ENCODE measurements at regions of chr15 and their contacts with region 1.

Region 1: GRCh38 chr15:90320061-90320884 is 31.8 kb upstream of the ZNF774 start:
- DNase-seq: peak; percentile 93
- H3K4me3 ChIP-seq: peak overlapping the region in 1 of 4 donors; percentile 11
- H3K27ac ChIP-seq: peak overlapping the region; percentile 28 to 50 (median 36)
- H3K4me1 ChIP-seq: peaks cover 0 to 42% (median 32%) of the 10 kb centered on the region in 4 donors
- H3K27me3 ChIP-seq: no peaks in the 10 kb centered on the region
- CTCF ChIP-seq: peak; percentile 95 to 100 (median 99)
- EP300 ChIP-seq: no peak
- POLR2A ChIP-seq: no peak

Region 2: DNA sequence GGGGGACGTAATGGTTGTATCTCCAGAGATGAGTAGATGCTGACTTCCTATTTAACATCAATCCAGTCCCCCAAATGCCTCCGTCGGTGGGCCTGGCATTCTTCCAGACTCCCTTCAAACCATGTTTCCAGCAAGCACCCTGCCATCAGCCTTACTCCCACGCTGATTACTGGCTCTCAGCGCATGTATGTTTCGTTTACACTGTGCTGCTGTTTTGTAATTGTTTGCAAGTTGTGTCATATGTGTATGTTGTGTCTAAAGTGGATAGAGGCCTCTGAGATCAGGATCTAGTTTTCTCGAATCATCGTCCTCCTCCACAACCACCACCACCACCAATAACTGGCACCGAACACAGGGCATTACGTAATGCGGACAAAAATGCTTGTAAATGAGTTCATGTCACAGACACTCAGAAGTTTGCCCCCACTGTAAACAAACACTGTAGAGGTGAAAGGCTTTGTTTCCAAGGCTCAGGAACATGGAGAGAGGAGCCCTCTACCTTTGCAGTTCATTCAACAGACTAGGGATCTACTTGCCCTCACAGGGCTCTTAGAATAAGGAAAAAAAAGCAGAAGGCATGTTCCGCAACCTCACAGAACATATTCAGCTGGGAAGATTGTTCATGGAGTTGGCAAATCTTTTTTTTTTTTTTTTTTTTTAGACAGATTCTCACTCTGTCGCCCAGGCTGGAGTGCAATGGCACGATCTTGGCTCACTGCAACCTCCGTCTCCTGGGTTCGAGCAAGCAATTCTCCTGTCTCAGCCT is 165.2 kb before region 1 on chr15:
- intact Hi-C with region 1: no loop called
- DNase-seq: peak; percentile 78
- H3K4me3 ChIP-seq: no peak overlapping the region
- H3K27ac ChIP-seq: peak overlapping the region; percentile 17 to 72 (median 64)
- H3K4me1 ChIP-seq: peaks cover 0 to 51% (median 36%) of the 10 kb centered on the region in 4 donors
- H3K27me3 ChIP-seq: no peaks in the 10 kb centered on the region
- CTCF ChIP-seq: no peak
- EP300 ChIP-seq: no peak
- POLR2A ChIP-seq: no peak

Region 3: DNA sequence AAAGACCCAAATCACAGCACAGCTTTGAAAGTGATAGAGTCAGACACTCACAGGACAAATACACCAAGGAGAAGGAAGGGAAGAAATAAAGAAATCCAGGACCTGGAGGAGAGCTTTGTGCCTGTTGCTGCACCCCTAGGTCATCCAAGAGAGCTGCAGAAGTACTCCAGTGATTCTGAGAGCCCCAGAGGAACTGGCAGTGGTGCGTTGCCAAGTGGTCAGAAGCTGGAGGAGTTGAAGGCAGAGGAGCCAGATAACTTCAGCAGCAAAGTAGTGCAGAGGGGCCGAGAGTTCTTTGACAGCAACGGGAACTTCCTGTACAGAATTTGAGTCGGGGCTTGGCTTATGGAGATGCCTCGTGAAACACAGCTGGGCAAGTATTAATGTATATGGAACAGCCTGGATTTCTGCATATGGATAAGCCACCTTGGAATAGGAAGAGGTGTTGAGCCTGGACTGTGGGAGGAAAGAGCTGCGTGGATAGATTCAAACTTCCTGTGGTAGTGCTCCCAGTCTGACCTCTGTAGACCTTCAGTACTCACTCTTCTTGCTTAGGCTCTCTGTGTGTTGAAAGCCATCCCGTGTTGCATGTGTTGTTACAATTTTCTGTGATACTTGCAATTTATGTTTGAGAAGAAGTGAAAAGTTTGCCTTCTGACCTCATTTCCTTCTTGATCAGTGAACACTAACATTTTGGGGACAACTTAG is 48.7 kb before region 1 on chr15:
- intact Hi-C with region 1: no loop called
- DNase-seq: no peak
- H3K4me3 ChIP-seq: no peak overlapping the region
- H3K27ac ChIP-seq: no peak overlapping the region
- H3K4me1 ChIP-seq: peaks cover 0 to 47% (median 44%) of the 10 kb centered on the region in 4 donors
- H3K27me3 ChIP-seq: no peaks in the 10 kb centered on the region
- CTCF ChIP-seq: no peak
- EP300 ChIP-seq: no peak
- POLR2A ChIP-seq: no peak

Region 4: DNA sequence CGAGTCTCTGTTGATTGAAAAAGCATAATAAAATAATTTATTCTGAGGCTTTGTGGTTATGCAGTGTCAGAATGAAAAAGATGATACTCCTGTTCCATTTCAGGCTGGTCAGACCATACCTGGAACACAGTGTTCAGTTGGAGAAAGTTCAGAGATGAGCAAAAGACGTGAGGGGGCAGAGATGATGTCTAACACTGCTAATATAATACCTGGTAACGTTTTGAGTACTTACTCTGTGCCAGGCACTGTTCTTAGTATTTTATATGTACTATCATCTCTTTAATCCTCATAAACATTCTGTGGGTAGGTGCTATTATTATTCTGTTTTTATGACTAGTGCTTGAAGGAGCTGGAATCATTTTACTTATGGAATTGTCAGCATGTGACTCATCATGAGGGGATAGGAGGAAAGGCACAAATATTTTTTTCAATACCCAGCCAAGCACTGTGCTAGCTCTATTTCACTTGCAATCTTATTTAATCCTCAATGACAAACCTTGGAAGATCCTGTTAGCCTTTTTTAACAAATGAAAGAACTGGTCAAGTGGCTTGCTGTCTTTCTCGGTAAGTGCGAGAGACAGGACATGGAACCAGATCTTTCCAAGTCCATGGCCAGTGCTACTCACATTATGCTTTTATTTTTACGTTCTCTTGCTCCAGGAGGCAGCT is 99.6 kb after region 1 on chr15:
- intact Hi-C with region 1: loop called (anchors 5 kb)
- DNase-seq: no peak
- H3K4me3 ChIP-seq: peak overlapping the region in 1 of 4 donors; percentile 14
- H3K27ac ChIP-seq: peak overlapping the region; percentile 77 to 89 (median 82)
- H3K4me1 ChIP-seq: peaks cover 0 to 78% (median 63%) of the 10 kb centered on the region in 4 donors
- H3K27me3 ChIP-seq: no peaks in the 10 kb centered on the region
- CTCF ChIP-seq: no peak
- EP300 ChIP-seq: peak; percentile 88 to 98 (median 90)
- POLR2A ChIP-seq: no peak

Region 5: DNA sequence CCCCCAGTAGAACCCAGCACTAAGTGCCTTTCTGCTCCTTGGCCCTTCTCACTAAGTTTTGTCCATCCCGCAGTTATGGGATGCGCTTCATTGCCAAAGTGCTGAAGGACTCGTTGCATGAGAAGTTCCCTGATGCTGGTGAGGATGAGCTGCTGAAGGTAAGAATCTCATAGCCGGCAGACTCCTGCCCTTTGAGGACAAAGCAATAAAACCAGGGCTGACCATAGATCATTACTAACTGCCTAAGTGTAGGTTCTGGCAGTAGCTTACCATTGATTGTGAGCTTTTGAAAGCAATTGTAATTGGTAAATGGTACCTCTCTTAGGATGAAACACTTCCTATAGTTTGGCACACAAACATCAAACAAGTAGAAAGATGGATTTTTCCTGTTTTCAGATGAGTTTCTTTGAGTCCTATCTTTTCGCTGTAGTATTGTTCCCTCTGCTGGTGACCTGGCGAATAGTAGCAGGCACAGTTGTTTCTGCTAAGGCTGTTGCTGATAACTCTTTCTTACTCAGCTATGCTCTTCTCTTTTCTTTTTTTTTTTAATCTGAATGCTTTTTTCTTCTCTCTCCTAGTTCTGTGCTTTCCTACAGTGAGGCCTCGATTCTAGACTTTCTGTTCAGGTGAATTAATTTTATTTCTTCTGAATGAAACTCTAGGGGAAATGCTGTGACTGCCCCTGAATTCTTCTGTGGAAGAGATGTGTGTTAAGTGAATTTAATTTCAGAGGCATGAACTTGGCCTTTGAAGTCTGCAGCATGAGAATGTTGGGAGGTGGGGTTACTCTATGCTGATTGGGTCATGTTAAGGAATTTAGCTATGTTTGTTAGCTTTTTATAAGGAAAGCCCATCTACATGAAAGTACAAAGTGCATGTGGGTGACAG is 162.1 kb after region 1 on chr15:
- intact Hi-C with region 1: loop called (anchors 1 kb)
- DNase-seq: no peak
- H3K4me3 ChIP-seq: no peak overlapping the region
- H3K27ac ChIP-seq: peak overlapping the region in 3 of 4 donors; percentile 24 to 49 (median 29)
- H3K4me1 ChIP-seq: peaks cover 0 to 11% (median 5%) of the 10 kb centered on the region in 4 donors
- H3K27me3 ChIP-seq: no peaks in the 10 kb centered on the region
- CTCF ChIP-seq: peak; percentile 54 to 91 (median 79)
- EP300 ChIP-seq: no peak
- POLR2A ChIP-seq: no peak